Caki2 (cell line): ENCODE measurements at regions of chr15 and their contacts with region 1.

Region 1: DNA sequence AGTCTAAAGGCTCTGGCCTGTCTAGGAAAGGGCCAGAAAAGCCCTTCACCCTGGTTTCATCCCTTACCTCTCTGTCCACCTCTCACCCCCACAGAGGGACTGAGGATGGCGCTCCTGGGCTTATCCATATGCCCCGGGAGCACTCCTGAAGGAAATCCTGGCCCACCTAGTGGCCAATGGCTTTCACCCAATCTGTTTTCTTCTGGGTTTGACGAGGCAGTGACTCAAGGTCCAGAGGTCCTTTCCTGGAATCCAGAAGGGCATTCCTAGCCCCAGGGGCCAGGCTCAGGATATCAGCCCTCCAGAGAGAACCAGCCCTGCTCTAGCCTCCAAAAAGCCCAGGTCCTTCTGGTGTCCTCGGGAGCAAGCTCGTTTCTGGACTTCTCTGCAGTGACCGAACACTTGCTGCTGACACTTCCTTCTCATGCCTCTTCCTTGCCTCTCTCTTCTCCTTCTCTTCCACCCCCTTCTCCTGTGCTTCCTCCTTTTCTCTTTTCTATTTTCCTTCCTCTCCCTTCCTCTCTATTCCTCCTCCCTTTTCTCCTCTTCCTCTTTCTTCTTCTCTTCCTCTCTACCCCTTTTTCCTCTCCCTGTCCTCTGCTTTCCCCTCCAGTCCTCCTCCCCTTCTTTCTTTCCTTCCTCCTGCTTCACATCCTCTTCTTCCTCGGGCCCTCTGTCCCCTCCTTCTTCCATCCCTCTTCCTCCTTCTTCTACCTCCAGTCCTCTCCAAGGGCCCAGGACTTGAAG is 59.6 kb downstream of the RHCG start:
- DNase-seq: no peak

Region 2: GRCh38 chr15:89293012-89293411 is 143.7 kb before region 1 on chr15:
- in situ Hi-C with region 1: no loop called
- DNase-seq: no peak

Region 3: GRCh38 chr15:89361451-89362202 is 75.1 kb before region 1 on chr15:
- in situ Hi-C with region 1: loop called (anchors 5 kb)
- DNase-seq: peak; percentile 63

Region 4: GRCh38 chr15:89395996-89396395 is 40.7 kb before region 1 on chr15:
- in situ Hi-C with region 1: no loop called
- DNase-seq: no peak